Naive thymus-derived CD4-positive, alpha-beta T cell (primary cell): ENCODE measurements at regions of chr7 and their contacts with region 1.

Region 1: GRCh38 chr7:1137510-1138167 is 22.4 kb downstream of the ZFAND2A start:
- DNase-seq: no peak
- ATAC-seq: peak; percentile 82
- H3K4me3 ChIP-seq: peak overlapping the region; percentile 83
- H3K4me3 Mint-ChIP-seq: peak overlapping the region; percentile 74 to 94 (median 91)
- H3K27ac ChIP-seq: peak overlapping the region; percentile 82
- H3K27ac Mint-ChIP-seq: peak overlapping the region; percentile 51 to 94 (median 86)
- H3K4me1 ChIP-seq: peaks cover 7 to 13% of the 10 kb centered on the region in 2 donors
- H3K4me1 Mint-ChIP-seq: peaks cover 8 to 19% (median 16%) of the 10 kb centered on the region in 7 donors
- H3K27me3 ChIP-seq: no peaks in the 10 kb centered on the region
- H3K27me3 Mint-ChIP-seq: no peaks in the 10 kb centered on the region

Region 2: DNA sequence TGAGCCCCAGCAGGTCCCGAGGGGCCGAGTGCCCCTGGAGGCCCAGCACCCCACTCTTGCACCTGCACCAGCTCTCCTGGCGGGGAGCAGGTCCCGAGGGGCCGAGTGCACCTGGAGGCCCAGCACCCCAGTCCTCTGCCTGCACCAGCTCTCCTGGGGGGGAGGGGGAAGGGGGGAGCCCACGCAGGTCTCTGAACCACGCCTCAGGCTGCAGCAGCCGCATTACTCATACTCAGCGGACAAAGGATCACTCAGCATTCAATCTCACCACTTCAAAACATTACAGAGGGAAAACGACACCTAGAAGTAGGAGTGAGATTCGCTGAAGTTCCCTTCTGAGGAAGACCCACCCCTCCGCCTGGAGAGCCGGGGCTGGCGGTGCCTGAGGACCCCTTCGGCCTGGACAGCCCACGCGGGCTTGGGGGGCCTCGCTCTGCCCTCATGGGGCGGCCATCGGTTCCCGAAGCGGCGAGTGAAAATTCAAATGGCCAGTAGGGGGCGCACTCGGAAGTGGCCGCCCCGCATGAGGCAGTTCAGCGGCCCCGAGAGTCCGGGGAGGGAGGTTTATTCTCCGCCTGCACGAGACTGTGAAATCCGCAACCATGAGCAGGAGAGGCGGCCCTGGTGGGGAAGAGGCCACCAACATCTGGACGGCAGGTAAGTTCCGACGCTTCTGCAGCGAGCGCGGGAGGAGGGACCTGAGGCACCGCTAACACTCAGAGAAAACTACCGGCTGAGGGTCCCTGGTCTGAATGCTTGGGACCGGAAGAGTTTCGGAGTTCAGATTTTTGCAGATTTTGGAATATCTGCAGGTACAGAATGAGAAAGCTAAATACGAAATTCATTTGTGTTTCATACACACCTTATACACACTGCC is 50.8 kb before region 1 on chr7:
- CTCF ChIA-PET with region 1: interaction called, 3 read pairs
- POLR2A ChIA-PET with region 1: no interaction called
- intact Hi-C with region 1: loop called (anchors 1 to 5 kb)
- DNase-seq: peak; percentile 44 to 83 (median 71)
- ATAC-seq: peak; percentile 87
- H3K4me3 ChIP-seq: peak overlapping the region; percentile 50
- H3K4me3 Mint-ChIP-seq: peak overlapping the region; percentile 59 to 86 (median 80)
- H3K27ac ChIP-seq: no peak overlapping the region
- H3K27ac Mint-ChIP-seq: peak overlapping the region in 1 of 9 donors; percentile 82
- H3K4me1 ChIP-seq: peaks cover 3 to 6% of the 10 kb centered on the region in 2 donors
- H3K4me1 Mint-ChIP-seq: peaks cover 7 to 20% (median 12%) of the 10 kb centered on the region in 7 donors
- H3K27me3 ChIP-seq: no peaks in the 10 kb centered on the region
- H3K27me3 Mint-ChIP-seq: peaks cover 0 to 3% (median 0%) of the 10 kb centered on the region in 5 donors

Region 3: GRCh38 chr7:1159891-1160668 is 22.4 kb after region 1 on chr7 and contains the start of gene ZFAND2A:
- CTCF ChIA-PET with region 1: no interaction called
- POLR2A ChIA-PET with region 1: interaction called, 10 read pairs
- intact Hi-C with region 1: loop called (anchors 1 kb)
- DNase-seq: peak; percentile 96 to 99 (median 98)
- ATAC-seq: peak; percentile 99
- H3K4me3 ChIP-seq: peak within 1 kb of the TSS; percentile 97
- H3K4me3 Mint-ChIP-seq: peak within 1 kb of the TSS; percentile 72 to 94 (median 88)
- H3K27ac ChIP-seq: peak within 1 kb of the TSS; percentile 96
- H3K27ac Mint-ChIP-seq: peak within 1 kb of the TSS; percentile 74 to 95 (median 90)
- H3K4me1 ChIP-seq: peaks cover 13 to 18% of the 10 kb centered on the region in 2 donors
- H3K4me1 Mint-ChIP-seq: peaks cover 9 to 35% (median 28%) of the 10 kb centered on the region in 7 donors
- H3K27me3 ChIP-seq: no peaks in the 10 kb centered on the region
- H3K27me3 Mint-ChIP-seq: no peaks in the 10 kb centered on the region
- total RNA-seq, gene ZFAND2A: 21.2 to 74.5 (median 38.6) TPM

Region 4: GRCh38 chr7:1169409-1170368 is 32.0 kb after region 1 on chr7:
- CTCF ChIA-PET with region 1: no interaction called
- POLR2A ChIA-PET with region 1: interaction called, 8 read pairs
- intact Hi-C with region 1: loop called in 1 of 2 experiments (anchors 1 kb)
- DNase-seq: peak; percentile 81 to 95 (median 94)
- ATAC-seq: peak; percentile 100
- H3K4me3 ChIP-seq: peak overlapping the region; percentile 63
- H3K4me3 Mint-ChIP-seq: peak overlapping the region; percentile 82 to 92 (median 89)
- H3K27ac ChIP-seq: peak overlapping the region; percentile 64
- H3K27ac Mint-ChIP-seq: peak overlapping the region in 8 of 9 donors; percentile 88 to 98 (median 94)
- H3K4me1 ChIP-seq: peaks cover 5 to 8% of the 10 kb centered on the region in 2 donors
- H3K4me1 Mint-ChIP-seq: peaks cover 8 to 16% (median 13%) of the 10 kb centered on the region in 7 donors
- H3K27me3 ChIP-seq: no peaks in the 10 kb centered on the region
- H3K27me3 Mint-ChIP-seq: no peaks in the 10 kb centered on the region

Region 5: DNA sequence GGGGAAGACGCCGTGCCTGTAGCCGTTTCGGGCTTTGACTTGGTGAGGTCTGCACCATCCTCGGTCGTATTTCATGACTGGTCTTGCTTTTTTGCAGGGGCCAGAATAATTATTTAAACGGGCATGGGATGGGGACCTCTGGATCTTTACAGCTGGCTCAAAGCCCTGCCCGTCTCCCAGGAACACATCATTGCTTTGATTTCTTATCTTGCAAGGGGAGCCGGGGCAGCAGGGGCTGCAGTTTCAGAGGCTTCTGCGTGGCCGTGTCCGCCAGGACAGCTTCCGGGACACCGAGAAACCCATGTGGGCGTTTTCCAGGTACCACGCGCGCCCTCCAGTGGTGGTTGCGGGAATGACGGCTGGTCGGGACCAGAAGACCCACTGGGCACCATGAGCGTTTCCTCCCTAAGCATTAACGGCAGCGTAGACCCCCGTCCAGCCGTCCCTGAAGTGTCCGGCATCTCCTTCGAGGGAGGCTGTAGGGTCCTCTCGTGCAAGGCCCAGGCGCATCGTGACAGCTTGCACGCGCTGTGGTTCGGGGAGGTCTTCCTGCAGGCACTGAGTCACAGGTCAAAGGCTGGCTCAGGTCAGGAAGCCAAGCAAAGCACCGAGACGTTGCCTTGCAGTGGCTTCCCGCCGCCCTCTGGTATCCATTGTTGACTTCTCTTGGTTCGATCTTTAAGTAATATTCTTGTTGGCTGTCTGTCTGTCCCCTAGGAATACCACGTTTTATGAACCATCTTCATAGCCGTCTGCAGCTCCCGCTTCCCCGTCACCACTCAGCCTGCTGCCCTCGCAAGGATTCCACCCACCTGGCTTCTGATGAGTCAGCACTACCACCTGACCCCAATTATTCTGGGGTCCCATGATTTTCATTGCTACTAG is 38.6 kb after region 1 on chr7:
- CTCF ChIA-PET with region 1: interaction called, 4 read pairs
- POLR2A ChIA-PET with region 1: no interaction called
- intact Hi-C with region 1: loop called (anchors 1 to 5 kb)
- DNase-seq: peak; percentile 38 to 88 (median 64)
- ATAC-seq: peak; percentile 81
- H3K4me3 ChIP-seq: peak overlapping the region; percentile 47
- H3K4me3 Mint-ChIP-seq: peak overlapping the region in 8 of 10 donors; percentile 32 to 78 (median 53)
- H3K27ac ChIP-seq: no peak overlapping the region
- H3K27ac Mint-ChIP-seq: peak overlapping the region in 1 of 9 donors; percentile 42
- H3K4me1 ChIP-seq: peaks cover 6 to 10% of the 10 kb centered on the region in 2 donors
- H3K4me1 Mint-ChIP-seq: peaks cover 7 to 15% (median 11%) of the 10 kb centered on the region in 7 donors
- H3K27me3 ChIP-seq: no peaks in the 10 kb centered on the region
- H3K27me3 Mint-ChIP-seq: peaks cover 11 to 19% (median 18%) of the 10 kb centered on the region in 5 donors

Region 6: GRCh38 chr7:2651336-2651735 is 1513.7 kb after region 1 on chr7:
- CTCF ChIA-PET with region 1: no interaction called
- POLR2A ChIA-PET with region 1: no interaction called
- intact Hi-C with region 1: no loop called
- DNase-seq: no peak
- ATAC-seq: no peak
- H3K4me3 ChIP-seq: no peak overlapping the region
- H3K4me3 Mint-ChIP-seq: no peak overlapping the region
- H3K27ac ChIP-seq: no peak overlapping the region
- H3K27ac Mint-ChIP-seq: no peak overlapping the region
- H3K4me1 ChIP-seq: no peaks in the 10 kb centered on the region
- H3K4me1 Mint-ChIP-seq: peaks cover 0 to 3% (median 0%) of the 10 kb centered on the region in 7 donors
- H3K27me3 ChIP-seq: no peaks in the 10 kb centered on the region
- H3K27me3 Mint-ChIP-seq: no peaks in the 10 kb centered on the region